ENCODE measurements at regions of chr6 and their contacts with region 1.

Region 1: GRCh38 chr6:32589598-32590449 is at the start of gene HLA-DRB1:
- DNase-seq: no peak
- H3K4me3 ChIP-seq: no peak within 1 kb of the TSS
- H3K27ac ChIP-seq: peak within 1 kb of the TSS in 1 of 3 donors; percentile 56
- H3K4me1 ChIP-seq: no peaks in the 10 kb centered on the region
- H3K27me3 ChIP-seq: no peaks in the 10 kb centered on the region
- CTCF ChIP-seq: no peak
- POLR2A ChIP-seq: peak in 1 of 2 donors; percentile 24
- total RNA-seq, gene HLA-DRB1: 17.1 to 28.1 (median 22.8) TPM

Region 2: DNA sequence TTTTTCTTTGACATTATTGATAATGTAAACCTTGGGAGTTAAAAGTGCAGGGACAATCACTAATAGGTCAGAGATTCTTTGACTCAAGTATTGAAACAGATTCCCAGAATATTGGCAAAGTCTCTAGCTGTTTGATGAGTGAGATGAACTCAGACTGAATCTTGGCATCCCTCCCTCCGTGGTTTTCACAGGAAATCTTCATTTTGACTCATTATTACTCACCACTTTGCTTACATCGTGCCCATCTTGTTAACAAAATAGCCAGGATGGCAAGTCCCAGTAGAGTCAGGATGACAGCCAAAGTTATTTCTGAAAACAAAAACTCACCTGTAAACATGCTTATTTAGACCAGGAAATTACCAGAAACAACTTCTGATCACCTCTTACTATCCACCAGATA is 220.1 kb before region 1 on chr6:
- intact Hi-C with region 1: no loop called
- DNase-seq: no peak
- H3K4me3 ChIP-seq: no peak overlapping the region
- H3K27ac ChIP-seq: no peak overlapping the region
- H3K4me1 ChIP-seq: no peaks in the 10 kb centered on the region
- H3K27me3 ChIP-seq: no peaks in the 10 kb centered on the region
- CTCF ChIP-seq: no peak
- POLR2A ChIP-seq: no peak

Region 3: DNA sequence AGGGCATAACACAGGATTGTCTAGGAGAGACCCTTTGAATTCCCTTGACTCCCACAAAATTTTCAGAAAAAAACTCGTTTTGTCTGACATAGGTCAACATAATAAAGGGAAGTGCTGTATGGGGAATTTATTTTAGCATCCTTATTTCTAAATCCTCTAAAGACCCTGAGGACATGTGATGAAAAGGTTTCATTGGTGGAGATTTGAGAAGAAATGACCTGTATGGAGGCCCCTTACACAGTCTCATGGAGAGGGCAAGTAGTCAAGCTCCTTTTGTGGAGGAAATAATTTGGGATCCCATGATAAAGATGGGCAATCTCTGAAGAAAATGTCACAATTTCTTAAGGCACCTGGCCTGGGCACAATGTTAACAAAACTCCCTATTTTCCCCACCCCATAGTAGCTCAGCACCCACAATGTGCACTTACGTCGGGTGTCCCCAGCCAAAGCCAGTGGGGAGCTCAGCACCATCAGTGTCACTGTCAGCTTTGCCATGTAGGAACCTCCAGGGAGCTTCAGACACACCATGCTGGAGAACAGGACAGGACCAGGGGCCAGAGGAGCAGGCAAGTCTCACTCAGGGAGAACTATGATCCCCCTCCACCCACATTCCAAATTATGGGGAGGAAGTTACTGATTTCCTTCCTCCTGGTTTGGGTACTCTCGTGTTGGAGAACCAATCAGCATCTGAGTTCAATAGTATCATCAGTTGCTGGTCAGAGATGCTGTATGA is 60.0 kb before region 1 on chr6 and contains the start of gene HLA-DRB5:
- intact Hi-C with region 1: loop called (anchors 10 kb)
- DNase-seq: peak; percentile 2
- H3K4me3 ChIP-seq: no peak within 1 kb of the TSS
- H3K27ac ChIP-seq: no peak within 1 kb of the TSS
- H3K4me1 ChIP-seq: no peaks in the 10 kb centered on the region
- H3K27me3 ChIP-seq: no peaks in the 10 kb centered on the region
- CTCF ChIP-seq: no peak
- POLR2A ChIP-seq: no peak
- total RNA-seq, gene HLA-DRB5: 1.6 to 25.6 TPM in 2 of 4 donors, not detected in the others

Measured in thyroid gland (tissue), 4 donors.